ENCODE measurements at regions of chr10 and their contacts with region 1.

Region 1: GRCh38 chr10:23095404-23095965 is at the start of gene MSRB2:
- DNase-seq: peak; percentile 92
- H3K4me3 Mint-ChIP-seq: peak within 1 kb of the TSS; percentile 97
- H3K27ac Mint-ChIP-seq: peak within 1 kb of the TSS; percentile 90
- H3K4me1 Mint-ChIP-seq: peaks cover 34% of the 10 kb centered on the region
- H3K27me3 Mint-ChIP-seq: no peaks in the 10 kb centered on the region
- total RNA-seq, gene MSRB2: 13.9 to 16.0 TPM

Region 2: DNA sequence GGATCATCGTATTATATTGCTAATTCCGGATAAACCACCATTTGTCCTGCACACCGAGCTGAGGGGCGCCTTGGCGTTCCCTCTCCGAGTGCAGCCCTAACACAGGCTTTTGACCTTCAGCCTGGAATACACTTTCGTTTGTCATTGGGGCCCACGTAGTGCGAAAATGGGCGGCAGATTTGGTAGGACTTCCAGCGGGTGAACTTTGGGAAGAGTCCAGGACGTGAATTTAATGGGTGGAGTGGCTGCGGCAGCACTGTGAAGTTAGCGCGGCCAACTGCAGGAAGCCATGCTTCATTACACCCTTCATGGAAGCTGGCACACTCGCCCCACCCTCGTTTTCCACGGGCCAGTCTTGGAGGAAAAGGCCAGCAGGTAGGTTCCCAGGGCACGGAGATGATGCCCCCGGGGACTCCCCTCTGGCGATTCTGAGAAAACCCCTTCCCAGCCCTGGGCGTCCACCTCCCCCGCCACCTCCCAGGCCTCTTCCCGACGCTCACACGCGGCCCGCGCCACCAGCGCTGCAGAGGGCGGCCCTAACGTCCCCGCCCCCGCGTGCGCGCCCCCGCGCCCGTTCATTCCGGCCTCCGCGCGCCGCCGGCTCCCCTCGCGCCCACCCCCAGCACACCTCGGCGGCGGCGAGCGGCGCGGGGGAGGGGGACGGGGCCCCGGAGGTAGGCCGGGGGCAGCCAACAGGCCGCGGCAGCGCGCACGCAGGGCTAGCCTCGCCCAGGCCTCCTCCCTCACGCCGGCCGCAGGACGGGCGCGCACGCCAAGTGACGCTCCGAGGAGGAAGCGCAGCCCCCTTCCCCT is 1561.8 kb before region 1 on chr10 and contains the start of gene MLLT10:
- CTCF ChIA-PET with region 1: no interaction called
- intact Hi-C with region 1: loop called (anchors 5 kb)
- DNase-seq: peak; percentile 91
- H3K4me3 Mint-ChIP-seq: peak within 1 kb of the TSS; percentile 85
- H3K27ac Mint-ChIP-seq: peak within 1 kb of the TSS; percentile 91
- H3K4me1 Mint-ChIP-seq: peaks cover 23% of the 10 kb centered on the region
- H3K27me3 Mint-ChIP-seq: no peaks in the 10 kb centered on the region
- total RNA-seq, gene MLLT10: 23.0 to 23.7 TPM

Region 3: GRCh38 chr10:22022257-22023032 is 1073.0 kb before region 1 on chr10:
- CTCF ChIA-PET with region 1: no interaction called
- intact Hi-C with region 1: loop called (anchors 5 kb)
- DNase-seq: peak; percentile 78
- H3K4me3 Mint-ChIP-seq: peak overlapping the region; percentile 65
- H3K27ac Mint-ChIP-seq: peak overlapping the region; percentile 80
- H3K4me1 Mint-ChIP-seq: peaks cover 22% of the 10 kb centered on the region
- H3K27me3 Mint-ChIP-seq: peaks cover 3% of the 10 kb centered on the region

Region 4: DNA sequence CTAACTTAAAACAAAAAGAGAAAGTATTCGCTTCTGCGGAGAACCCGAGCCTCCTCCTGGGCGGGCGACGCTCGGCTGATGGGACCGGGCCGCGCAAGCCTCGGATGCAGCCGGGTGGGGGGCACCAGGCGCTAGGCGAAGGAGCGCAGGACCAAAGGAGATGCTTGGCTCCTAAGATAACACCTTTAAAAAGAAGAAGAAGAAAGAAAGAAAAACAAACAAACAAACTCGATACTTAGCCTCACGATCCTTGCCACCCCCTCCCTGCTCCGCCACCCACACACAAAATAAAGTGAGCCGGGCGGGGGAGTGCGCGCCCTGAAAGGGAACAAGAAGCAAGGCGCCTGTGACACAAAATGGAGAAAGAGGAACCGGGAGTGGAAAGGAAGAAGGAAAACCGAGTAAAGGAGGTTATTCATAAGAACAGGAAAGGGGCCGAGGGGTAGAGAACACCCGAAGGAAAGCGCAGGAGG is 843.7 kb before region 1 on chr10:
- CTCF ChIA-PET with region 1: no interaction called
- intact Hi-C with region 1: loop called (anchors 5 kb)
- DNase-seq: peak; percentile 74
- H3K4me3 Mint-ChIP-seq: peak overlapping the region; percentile 99
- H3K27ac Mint-ChIP-seq: peak overlapping the region; percentile 99
- H3K4me1 Mint-ChIP-seq: peaks cover 34% of the 10 kb centered on the region
- H3K27me3 Mint-ChIP-seq: peaks cover 5% of the 10 kb centered on the region

Region 5: GRCh38 chr10:22780474-22780885 is 315.0 kb before region 1 on chr10:
- CTCF ChIA-PET with region 1: no interaction called
- intact Hi-C with region 1: no loop called
- DNase-seq: no peak
- H3K4me3 Mint-ChIP-seq: no peak overlapping the region
- H3K27ac Mint-ChIP-seq: no peak overlapping the region
- H3K4me1 Mint-ChIP-seq: peaks cover 4% of the 10 kb centered on the region
- H3K27me3 Mint-ChIP-seq: no peaks in the 10 kb centered on the region

Region 6: GRCh38 chr10:22893781-22894180 is 201.7 kb before region 1 on chr10:
- CTCF ChIA-PET with region 1: no interaction called
- intact Hi-C with region 1: no loop called
- DNase-seq: no peak
- H3K4me3 Mint-ChIP-seq: no peak overlapping the region
- H3K27ac Mint-ChIP-seq: no peak overlapping the region
- H3K4me1 Mint-ChIP-seq: no peaks in the 10 kb centered on the region
- H3K27me3 Mint-ChIP-seq: no peaks in the 10 kb centered on the region

Region 7: GRCh38 chr10:23186697-23187096 is 91.2 kb after region 1 on chr10:
- CTCF ChIA-PET with region 1: no interaction called
- intact Hi-C with region 1: no loop called
- DNase-seq: no peak
- H3K4me3 Mint-ChIP-seq: no peak overlapping the region
- H3K27ac Mint-ChIP-seq: no peak overlapping the region
- H3K4me1 Mint-ChIP-seq: peaks cover 3% of the 10 kb centered on the region
- H3K27me3 Mint-ChIP-seq: peaks cover 47% of the 10 kb centered on the region

Region 8: DNA sequence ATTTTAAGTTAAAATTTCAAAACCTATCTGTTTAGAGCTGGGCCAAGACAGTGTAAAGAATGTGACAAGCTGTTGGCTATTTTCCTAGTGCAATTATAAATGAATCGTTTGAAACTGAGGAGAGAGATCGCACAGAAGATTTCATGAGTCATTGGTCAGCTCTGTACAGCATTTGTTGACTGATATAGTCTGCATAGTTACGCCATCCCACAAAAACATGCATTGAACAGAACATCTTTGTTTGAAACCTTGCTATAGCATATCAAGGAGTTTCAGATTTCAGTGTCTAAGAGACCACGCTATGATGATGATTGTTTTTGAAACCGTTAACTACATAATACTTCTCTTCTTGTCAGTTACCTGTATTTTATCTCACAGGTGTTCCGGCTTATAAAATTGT is 250.4 kb after region 1 on chr10:
- CTCF ChIA-PET with region 1: no interaction called
- intact Hi-C with region 1: no loop called
- DNase-seq: no peak
- H3K4me3 Mint-ChIP-seq: no peak overlapping the region
- H3K27ac Mint-ChIP-seq: no peak overlapping the region
- H3K4me1 Mint-ChIP-seq: peaks cover 25% of the 10 kb centered on the region
- H3K27me3 Mint-ChIP-seq: no peaks in the 10 kb centered on the region

Region 9: GRCh38 chr10:23368816-23369640 is 273.5 kb after region 1 on chr10:
- CTCF ChIA-PET with region 1: no interaction called
- intact Hi-C with region 1: loop called (anchors 10 kb)
- DNase-seq: peak; percentile 24
- H3K4me3 Mint-ChIP-seq: peak overlapping the region; percentile 14
- H3K27ac Mint-ChIP-seq: peak overlapping the region; percentile 73
- H3K4me1 Mint-ChIP-seq: peaks cover 63% of the 10 kb centered on the region
- H3K27me3 Mint-ChIP-seq: no peaks in the 10 kb centered on the region

Region 10: DNA sequence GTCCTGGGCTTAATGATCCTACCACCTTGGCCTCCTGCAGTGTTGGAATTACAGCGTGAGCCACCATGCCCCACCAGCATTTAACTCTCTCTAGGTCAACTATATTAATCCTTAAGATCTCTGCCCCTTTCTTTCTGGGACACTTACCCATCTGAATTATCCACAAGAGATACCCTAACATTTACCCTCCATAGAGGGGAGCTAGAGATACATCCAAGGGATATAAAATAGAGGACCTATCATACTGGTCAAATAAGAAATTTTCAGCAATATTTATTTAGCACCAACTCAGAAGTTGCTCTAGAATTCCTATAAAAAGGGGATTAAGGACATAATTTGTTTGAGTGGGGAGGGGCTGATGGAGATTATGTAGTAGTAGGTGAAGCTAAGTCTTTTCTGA is 439.9 kb after region 1 on chr10:
- CTCF ChIA-PET with region 1: no interaction called
- intact Hi-C with region 1: loop called (anchors 5 kb)
- DNase-seq: no peak
- H3K4me3 Mint-ChIP-seq: peak overlapping the region; percentile 14
- H3K27ac Mint-ChIP-seq: peak overlapping the region; percentile 72
- H3K4me1 Mint-ChIP-seq: peaks cover 77% of the 10 kb centered on the region
- H3K27me3 Mint-ChIP-seq: no peaks in the 10 kb centered on the region